PC-3 (cell line): ENCODE measurements at regions of chr14 and their contacts with region 1.

Region 1: DNA sequence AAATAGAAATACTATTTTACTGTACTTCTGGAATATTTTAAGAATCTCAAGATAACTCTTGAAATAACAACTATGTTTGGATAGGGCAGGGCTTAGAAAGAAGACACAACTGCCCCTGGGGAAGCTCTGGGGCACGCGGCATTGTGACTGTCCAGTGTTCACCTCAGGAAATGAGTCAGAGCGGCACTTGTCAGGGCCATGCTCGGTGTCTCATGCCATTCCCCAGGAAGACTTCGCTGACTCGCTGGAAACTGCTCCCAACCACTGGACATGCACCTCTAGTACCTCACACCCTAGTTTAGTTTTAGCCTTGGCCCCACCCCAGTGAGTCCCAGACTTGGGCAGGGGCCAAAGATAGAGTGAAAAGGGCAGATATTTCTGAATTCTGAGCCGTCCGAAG is 192.0 kb downstream of the TTC7B start:
- DNase-seq: peak; percentile 82
- ATAC-seq: peak; percentile 99
- H3K4me3 ChIP-seq: no peak overlapping the region
- H3K27ac ChIP-seq: peak overlapping the region; percentile 16; the same call in 1 of the 2 replicates
- H3K4me1 ChIP-seq: peaks cover 20% of the 10 kb centered on the region
- H3K27me3 ChIP-seq: no peaks in the 10 kb centered on the region
- CTCF ChIP-seq: no peak

Region 2: GRCh38 chr14:90677484-90678050 is 53.3 kb after region 1 on chr14:
- CTCF ChIA-PET with region 1: no interaction called
- POLR2A ChIA-PET with region 1: no interaction called
- intact Hi-C with region 1: loop called (anchors 2 kb)
- DNase-seq: peak; percentile 79
- ATAC-seq: peak; percentile 98
- H3K4me3 ChIP-seq: no peak overlapping the region
- H3K27ac ChIP-seq: peak overlapping the region; percentile 62
- H3K4me1 ChIP-seq: peaks cover 20% of the 10 kb centered on the region
- H3K27me3 ChIP-seq: no peaks in the 10 kb centered on the region
- CTCF ChIP-seq: no peak

Region 3: GRCh38 chr14:90692061-90692460 is 67.8 kb after region 1 on chr14:
- CTCF ChIA-PET with region 1: no interaction called
- POLR2A ChIA-PET with region 1: no interaction called
- intact Hi-C with region 1: no loop called
- DNase-seq: no peak
- ATAC-seq: no peak
- H3K4me3 ChIP-seq: no peak overlapping the region
- H3K27ac ChIP-seq: no peak overlapping the region
- H3K4me1 ChIP-seq: 0 out of 2 replicates have a peak, but pooled peaks cover 3% of the 10 kb centered on the region
- H3K27me3 ChIP-seq: no peaks in the 10 kb centered on the region
- CTCF ChIP-seq: no peak

Region 4: GRCh38 chr14:90796329-90796728 is 172.1 kb after region 1 on chr14:
- CTCF ChIA-PET with region 1: no interaction called
- POLR2A ChIA-PET with region 1: no interaction called
- intact Hi-C with region 1: no loop called
- DNase-seq: no peak
- ATAC-seq: no peak
- H3K4me3 ChIP-seq: no peak overlapping the region
- H3K27ac ChIP-seq: peak overlapping the region; percentile 46
- H3K4me1 ChIP-seq: peaks cover 16% of the 10 kb centered on the region
- H3K27me3 ChIP-seq: no peaks in the 10 kb centered on the region
- CTCF ChIP-seq: no peak